T-cell (primary cell): ENCODE measurements at regions of chr2 and their contacts with region 1.

Region 1: DNA sequence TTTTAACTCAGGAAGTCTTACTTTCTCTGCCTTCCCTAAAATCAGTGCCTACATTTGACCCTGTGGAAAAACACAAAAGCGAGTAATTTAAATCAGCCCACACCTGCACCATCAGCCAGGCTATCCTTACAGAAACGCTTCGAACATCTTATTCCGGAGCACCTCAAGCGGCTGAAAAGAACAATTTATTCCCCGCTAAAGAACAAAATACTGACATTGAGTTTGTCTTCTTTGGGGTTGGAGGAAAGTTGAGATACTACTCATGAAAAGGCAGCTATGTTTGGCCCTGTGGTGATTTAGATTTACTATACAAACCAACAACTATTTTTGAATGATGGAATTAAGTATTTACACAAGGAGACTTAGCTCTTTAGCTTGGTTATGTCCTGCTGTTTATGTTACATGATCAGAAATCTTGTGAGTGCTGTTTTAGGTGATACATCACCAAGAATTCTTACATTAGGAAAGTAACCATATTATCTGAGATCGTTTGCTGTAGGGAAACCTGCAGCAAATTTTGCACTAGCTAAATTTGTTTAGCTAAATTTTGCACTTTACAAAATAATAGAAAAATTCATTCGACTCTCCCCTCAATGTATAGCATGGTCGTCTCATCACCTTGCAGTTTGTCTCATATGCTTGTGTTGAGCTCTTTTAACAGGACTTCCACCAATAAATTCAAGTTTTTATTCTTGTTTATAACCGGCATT is 158.8 kb upstream of the SIX2 start:
- DNase-seq: no peak
- ATAC-seq: no peak
- H3K4me3 ChIP-seq: peak overlapping the region in 1 of 2 donors; percentile 59
- H3K4me3 Mint-ChIP-seq: peak overlapping the region in 1 of 3 donors; percentile 66
- H3K27ac ChIP-seq: no peak overlapping the region
- H3K27ac Mint-ChIP-seq: no peak overlapping the region
- H3K4me1 ChIP-seq: peaks cover 5 to 6% of the 10 kb centered on the region in 2 experiments
- H3K4me1 Mint-ChIP-seq: peaks cover 0 to 9% (median 4%) of the 10 kb centered on the region in 3 donors
- H3K27me3 ChIP-seq: peaks cover 17 to 27% of the 10 kb centered on the region in 2 experiments
- H3K27me3 Mint-ChIP-seq: peaks cover 53 to 57% of the 10 kb centered on the region in 2 donors

Region 2: GRCh38 chr2:44602446-44602845 is 565.6 kb before region 1 on chr2:
- CTCF ChIA-PET with region 1: no interaction called
- POLR2A ChIA-PET with region 1: interaction called in 1 of 2 experiments, 10 read pairs
- DNase-seq: no peak
- ATAC-seq: no peak
- H3K4me3 ChIP-seq: no peak overlapping the region
- H3K4me3 Mint-ChIP-seq: no peak overlapping the region
- H3K27ac ChIP-seq: no peak overlapping the region
- H3K27ac Mint-ChIP-seq: no peak overlapping the region
- H3K4me1 ChIP-seq: no peaks in the 10 kb centered on the region
- H3K4me1 Mint-ChIP-seq: no peaks in the 10 kb centered on the region
- H3K27me3 ChIP-seq: no peaks in the 10 kb centered on the region
- H3K27me3 Mint-ChIP-seq: no peaks in the 10 kb centered on the region

Region 3: DNA sequence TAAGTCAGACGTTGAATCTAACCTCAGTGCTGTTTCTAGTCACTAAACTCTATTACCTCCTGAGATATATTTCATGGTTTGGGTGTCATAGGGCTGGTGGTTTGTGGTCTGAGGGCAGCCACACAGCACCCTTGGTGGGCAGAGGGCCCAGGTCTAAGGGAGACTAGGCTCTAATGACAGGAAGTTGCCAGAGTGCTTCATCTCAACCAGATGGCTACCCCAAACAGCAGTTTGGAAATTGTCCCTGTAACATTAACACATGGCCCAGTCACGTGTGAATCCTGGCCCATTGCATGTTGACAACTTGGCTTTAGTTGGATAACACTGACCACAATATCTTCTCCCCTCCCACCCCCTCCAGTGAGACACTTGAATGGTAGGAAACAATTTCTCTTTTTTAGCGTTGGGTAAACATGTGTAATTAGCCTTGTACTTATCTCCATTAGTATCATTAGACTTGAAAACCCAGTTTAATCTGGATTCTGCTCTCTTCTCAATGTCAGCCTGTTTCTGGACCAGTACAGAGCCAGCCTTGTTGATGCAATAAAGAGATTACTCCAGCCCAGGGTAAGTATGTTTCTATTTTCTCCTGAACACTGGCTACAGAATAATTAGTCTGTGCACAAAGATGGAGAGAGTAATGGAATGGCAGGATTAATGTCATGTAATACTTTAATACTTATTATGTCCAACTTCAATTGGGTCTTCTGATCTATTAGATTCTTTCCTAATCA is 414.4 kb before region 1 on chr2:
- CTCF ChIA-PET with region 1: no interaction called
- POLR2A ChIA-PET with region 1: no interaction called
- DNase-seq: peak in 4 of 35 experiments; percentile 2 to 20 (median 8)
- ATAC-seq: peak in 1 of 4 experiments; percentile 26
- H3K4me3 ChIP-seq: no peak overlapping the region
- H3K4me3 Mint-ChIP-seq: no peak overlapping the region
- H3K27ac ChIP-seq: no peak overlapping the region
- H3K27ac Mint-ChIP-seq: no peak overlapping the region
- H3K4me1 ChIP-seq: peaks cover 0 to 8% of the 10 kb centered on the region in 2 experiments
- H3K4me1 Mint-ChIP-seq: peaks cover 0 to 8% (median 8%) of the 10 kb centered on the region in 3 donors
- H3K27me3 ChIP-seq: no peaks in the 10 kb centered on the region
- H3K27me3 Mint-ChIP-seq: no peaks in the 10 kb centered on the region